ENCODE measurements at regions of chr12 and their contacts with region 1.

Region 1: GRCh38 chr12:49740930-49741881 is at the start of gene TMBIM6:
- DNase-seq: peak; percentile 99
- ATAC-seq: peak; percentile 93
- H3K4me3 Mint-ChIP-seq: peak within 1 kb of the TSS; percentile 89
- H3K27ac Mint-ChIP-seq: peak within 1 kb of the TSS; percentile 100
- H3K4me1 Mint-ChIP-seq: peaks cover 45% of the 10 kb centered on the region
- H3K27me3 Mint-ChIP-seq: no peaks in the 10 kb centered on the region
- total RNA-seq, gene TMBIM6: 378 to 450 TPM

Region 2: DNA sequence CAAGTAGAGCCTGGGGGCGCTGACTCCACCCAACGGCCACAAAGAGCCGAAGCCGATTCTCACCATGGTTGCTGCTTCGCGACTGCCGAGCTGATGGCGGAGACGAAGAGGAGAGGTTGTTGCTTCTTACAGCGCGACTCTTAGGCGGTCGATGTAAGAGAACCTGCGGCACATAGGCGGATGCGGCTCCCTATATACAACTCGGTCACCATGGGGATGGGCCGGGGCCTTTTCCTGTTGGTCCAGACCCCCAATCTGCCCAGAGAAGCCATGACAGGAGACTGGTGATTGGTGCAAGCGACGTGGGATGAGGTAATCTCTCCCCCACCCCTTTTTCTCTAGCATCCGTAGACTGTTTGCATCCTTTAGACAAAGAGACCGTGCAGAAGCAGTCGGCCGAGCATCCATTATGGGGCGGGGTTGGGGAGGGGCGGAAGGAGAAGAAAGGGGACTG is 552.3 kb before region 1 on chr12 and contains the start of gene TUBA1A:
- CTCF ChIA-PET with region 1: no interaction called
- POLR2A ChIA-PET with region 1: no interaction called
- intact Hi-C with region 1: loop called in 1 of 2 experiments (anchors 5 kb)
- DNase-seq: peak; percentile 97
- ATAC-seq: peak; percentile 95
- H3K4me3 Mint-ChIP-seq: peak within 1 kb of the TSS; percentile 92
- H3K27ac Mint-ChIP-seq: peak within 1 kb of the TSS; percentile 92
- H3K4me1 Mint-ChIP-seq: peaks cover 24% of the 10 kb centered on the region
- H3K27me3 Mint-ChIP-seq: no peaks in the 10 kb centered on the region
- total RNA-seq, gene TUBA1A: 75.7 to 98.5 TPM

Region 3: GRCh38 chr12:49567611-49568441 is 173.4 kb before region 1 on chr12 and contains the start of gene MCRS1:
- CTCF ChIA-PET with region 1: no interaction called
- POLR2A ChIA-PET with region 1: no interaction called
- intact Hi-C with region 1: loop called in 1 of 2 experiments (anchors 1 kb)
- DNase-seq: peak; percentile 93
- ATAC-seq: peak; percentile 88
- H3K4me3 Mint-ChIP-seq: peak within 1 kb of the TSS; percentile 90
- H3K27ac Mint-ChIP-seq: peak within 1 kb of the TSS; percentile 95
- H3K4me1 Mint-ChIP-seq: peaks cover 37% of the 10 kb centered on the region
- H3K27me3 Mint-ChIP-seq: no peaks in the 10 kb centered on the region
- total RNA-seq, gene MCRS1: 48.2 to 58.2 TPM

Region 4: DNA sequence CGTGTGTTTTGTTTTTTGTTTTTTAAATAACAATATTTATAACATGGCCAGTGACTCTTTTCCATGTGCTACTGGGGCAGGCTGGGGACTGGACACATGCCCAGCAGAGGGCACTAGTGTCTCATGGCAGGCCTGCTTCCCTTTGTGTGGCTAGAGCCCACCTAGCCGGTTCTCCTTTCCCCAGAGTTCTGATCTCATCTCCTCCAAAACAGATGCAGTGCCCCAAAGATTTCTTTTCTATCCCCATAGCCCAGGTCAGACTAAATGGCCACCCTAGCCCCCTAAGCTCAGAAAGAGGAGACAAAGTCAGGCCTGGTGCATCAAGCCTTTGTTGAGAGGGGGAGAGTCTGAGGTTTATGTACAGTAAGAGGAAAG is 96.6 kb before region 1 on chr12:
- CTCF ChIA-PET with region 1: interaction called, 12 read pairs
- POLR2A ChIA-PET with region 1: interaction called, 5 read pairs
- intact Hi-C with region 1: loop called in 1 of 2 experiments (anchors 1 kb)
- DNase-seq: peak; percentile 89
- ATAC-seq: peak; percentile 93
- H3K4me3 Mint-ChIP-seq: no peak overlapping the region
- H3K27ac Mint-ChIP-seq: peak overlapping the region; percentile 78
- H3K4me1 Mint-ChIP-seq: peaks cover 18% of the 10 kb centered on the region
- H3K27me3 Mint-ChIP-seq: no peaks in the 10 kb centered on the region

Region 5: GRCh38 chr12:49828133-49829091 is 87.2 kb after region 1 on chr12 and contains the start of gene NCKAP5L:
- CTCF ChIA-PET with region 1: interaction called, 7 read pairs
- POLR2A ChIA-PET with region 1: interaction called, 9 read pairs
- intact Hi-C with region 1: loop called (anchors 1 kb)
- DNase-seq: peak; percentile 97
- ATAC-seq: peak; percentile 99
- H3K4me3 Mint-ChIP-seq: peak within 1 kb of the TSS; percentile 86
- H3K27ac Mint-ChIP-seq: peak within 1 kb of the TSS; percentile 90
- H3K4me1 Mint-ChIP-seq: peaks cover 27% of the 10 kb centered on the region
- H3K27me3 Mint-ChIP-seq: no peaks in the 10 kb centered on the region
- total RNA-seq, gene NCKAP5L: 4.3 to 4.5 TPM

Region 6: DNA sequence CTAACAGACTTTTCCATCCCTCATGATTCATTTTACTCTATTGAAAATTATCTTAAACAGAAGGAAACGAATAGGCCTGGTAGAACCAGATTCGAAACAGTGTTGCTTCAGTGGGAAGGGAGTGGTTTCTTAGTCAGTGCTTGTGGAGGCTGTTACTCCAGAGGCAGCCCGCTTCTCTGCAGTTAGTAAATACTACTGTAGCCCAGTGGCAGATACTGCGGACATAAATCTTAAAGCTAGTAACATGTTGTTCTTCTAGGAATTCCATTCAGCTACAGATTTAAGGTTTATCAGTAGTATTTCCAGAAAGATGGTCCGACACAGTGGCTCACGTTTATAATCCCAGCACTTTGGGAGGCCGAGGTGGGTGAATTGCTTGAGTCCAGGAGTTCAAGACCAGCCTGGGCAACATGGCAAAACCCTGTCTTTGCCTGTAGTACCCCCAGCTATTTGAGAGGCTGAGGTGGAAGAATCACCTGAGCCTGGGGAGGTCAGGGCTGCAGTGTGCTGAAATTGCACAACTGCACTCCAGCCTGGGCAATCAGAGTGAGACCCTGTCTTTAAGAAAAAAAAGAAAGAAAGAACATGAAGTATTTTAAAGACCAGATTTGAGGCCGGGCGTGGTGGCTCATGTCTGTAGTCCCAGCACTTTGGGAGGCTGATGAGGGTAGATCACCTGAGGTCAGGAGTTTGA is 809.5 kb after region 1 on chr12:
- CTCF ChIA-PET with region 1: no interaction called
- POLR2A ChIA-PET with region 1: no interaction called
- intact Hi-C with region 1: loop called in 1 of 2 experiments (anchors 10 kb)
- DNase-seq: no peak
- ATAC-seq: no peak
- H3K4me3 Mint-ChIP-seq: no peak overlapping the region
- H3K27ac Mint-ChIP-seq: no peak overlapping the region
- H3K4me1 Mint-ChIP-seq: peaks cover 66% of the 10 kb centered on the region
- H3K27me3 Mint-ChIP-seq: no peaks in the 10 kb centered on the region